ENCODE measurements at regions of chr6 and their contacts with region 1.

Region 1: GRCh38 chr6:145633981-145634627 is 101.2 kb downstream of the EPM2A start:
- DNase-seq: peak; percentile 75
- H3K4me3 ChIP-seq: no peak overlapping the region
- H3K27ac ChIP-seq: no peak overlapping the region
- H3K4me1 ChIP-seq: no peaks in the 10 kb centered on the region
- CTCF ChIP-seq: peak; percentile 92

Region 2: GRCh38 chr6:145372671-145373151 is 261.4 kb before region 1 on chr6:
- CTCF ChIA-PET with region 1: no interaction called
- POLR2A ChIA-PET with region 1: no interaction called
- intact Hi-C with region 1: no loop called
- DNase-seq: peak; percentile 20
- H3K4me3 ChIP-seq: peak overlapping the region; percentile 30
- H3K27ac ChIP-seq: no peak overlapping the region
- H3K4me1 ChIP-seq: no peaks in the 10 kb centered on the region
- CTCF ChIP-seq: no peak

Region 3: GRCh38 chr6:145705561-145705960 is 71.5 kb after region 1 on chr6:
- CTCF ChIA-PET with region 1: no interaction called
- POLR2A ChIA-PET with region 1: no interaction called
- intact Hi-C with region 1: no loop called
- DNase-seq: no peak
- H3K4me3 ChIP-seq: no peak overlapping the region
- H3K27ac ChIP-seq: no peak overlapping the region
- H3K4me1 ChIP-seq: no peaks in the 10 kb centered on the region
- CTCF ChIP-seq: no peak

Region 4: DNA sequence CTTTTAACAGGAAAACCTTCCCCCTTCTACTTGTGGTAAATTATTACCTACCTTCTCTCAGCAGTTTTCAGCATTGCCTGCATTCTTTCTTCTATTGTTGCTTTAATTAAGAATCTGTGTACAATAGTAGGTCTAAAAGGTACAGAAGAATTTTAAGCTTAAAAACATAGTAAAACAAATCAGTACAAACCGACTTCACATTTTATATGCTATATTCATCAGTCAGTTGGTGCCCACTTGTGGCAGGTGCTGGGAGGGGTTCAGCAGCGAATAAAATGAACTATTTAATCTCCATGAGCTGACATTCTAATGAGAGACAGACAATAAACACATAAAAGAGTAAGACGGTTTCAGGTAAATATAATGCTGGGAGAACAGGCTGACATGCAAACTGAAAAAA is 253.9 kb after region 1 on chr6:
- CTCF ChIA-PET with region 1: no interaction called
- POLR2A ChIA-PET with region 1: no interaction called
- intact Hi-C with region 1: loop called (anchors 10 kb)
- DNase-seq: peak; percentile 64
- H3K4me3 ChIP-seq: no peak overlapping the region
- H3K27ac ChIP-seq: no peak overlapping the region
- H3K4me1 ChIP-seq: peaks cover 7% of the 10 kb centered on the region
- CTCF ChIP-seq: peak; percentile 98